Mammary epithelial cell (primary cell): ENCODE measurements at regions of chr9 and their contacts with region 1.

Region 1: DNA sequence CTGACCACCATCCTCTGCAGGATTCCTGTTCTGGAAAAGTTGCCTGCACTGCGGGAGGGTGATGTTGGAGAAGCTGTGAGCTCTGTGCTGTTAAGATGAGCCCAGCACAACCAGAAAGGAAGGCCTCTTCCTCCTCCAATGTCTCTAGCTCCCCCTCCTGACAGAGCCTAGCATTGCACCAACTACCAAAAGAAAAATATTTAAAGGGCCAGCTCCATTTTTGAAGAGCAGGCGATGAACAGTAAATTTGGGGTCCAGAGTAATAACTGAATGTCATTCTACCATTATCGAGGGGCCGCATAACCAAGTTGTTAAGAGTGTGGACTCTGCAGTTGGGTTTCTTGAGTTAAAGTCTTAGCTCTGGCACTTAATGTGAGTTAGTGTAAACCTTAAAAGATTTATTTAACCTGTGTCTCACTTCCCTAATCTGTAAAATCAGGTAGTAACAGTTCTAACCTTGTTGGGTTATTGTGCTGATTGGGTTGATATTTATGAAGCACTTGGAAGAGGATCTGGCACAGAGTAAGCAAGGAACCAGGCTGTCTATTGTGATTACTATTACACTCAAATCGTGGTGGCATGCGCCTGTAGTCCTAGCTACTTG is 3.9 kb downstream of the TEX53 start:
- DNase-seq: peak; percentile 60
- H3K4me3 ChIP-seq: no peak overlapping the region
- H3K27ac ChIP-seq: no peak overlapping the region
- H3K4me1 ChIP-seq: peaks cover 3% of the 10 kb centered on the region
- H3K27me3 ChIP-seq: no peaks in the 10 kb centered on the region
- CTCF ChIP-seq: peak; percentile 89 to 97

Region 2: DNA sequence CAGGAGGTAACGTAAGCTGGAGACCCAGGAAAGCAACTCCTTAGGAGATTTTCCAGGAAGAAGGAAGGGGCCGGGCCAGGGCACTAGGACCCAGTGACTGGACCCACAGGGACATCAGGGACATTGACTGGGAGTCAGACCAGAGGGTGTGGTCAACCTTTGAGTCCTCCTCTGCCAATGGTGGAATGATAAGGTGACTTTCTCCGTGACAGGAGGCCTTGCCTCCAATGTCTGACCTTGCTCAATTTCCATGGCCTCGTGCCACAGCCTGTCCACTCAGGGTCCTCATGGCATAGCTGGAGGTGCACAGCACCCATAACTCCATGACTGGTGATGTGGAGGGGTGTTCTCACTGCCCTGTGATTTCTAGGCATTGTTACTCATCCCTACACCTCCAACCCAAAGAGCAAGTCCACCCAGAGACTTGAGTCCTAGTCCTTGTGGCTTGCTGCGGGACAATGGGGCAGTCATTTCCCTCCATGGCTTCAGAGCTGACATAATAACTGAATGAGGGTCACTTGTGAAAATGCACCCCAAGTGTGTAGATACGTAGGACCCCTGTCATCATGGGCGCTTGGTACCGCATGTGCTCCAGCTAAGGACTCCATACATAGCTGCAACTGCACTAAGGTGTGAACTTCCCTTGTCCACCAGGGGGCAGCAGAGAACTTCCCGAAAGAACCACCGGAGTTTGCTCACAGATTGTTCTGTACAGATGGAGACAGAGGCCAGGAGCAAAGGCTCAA is 571.5 kb before region 1 on chr9:
- CTCF ChIA-PET with region 1: no interaction called
- dilution Hi-C with region 1: no loop called
- in situ Hi-C with region 1: no loop called
- intact Hi-C with region 1: loop called (anchors 10 kb)
- DNase-seq: peak; percentile 72
- H3K4me3 ChIP-seq: no peak overlapping the region
- H3K27ac ChIP-seq: no peak overlapping the region
- H3K4me1 ChIP-seq: no peaks in the 10 kb centered on the region
- H3K27me3 ChIP-seq: no peaks in the 10 kb centered on the region
- CTCF ChIP-seq: peak; percentile 91 to 92

Region 3: GRCh38 chr9:114413861-114414301 is 239.8 kb before region 1 on chr9:
- CTCF ChIA-PET with region 1: no interaction called
- dilution Hi-C with region 1: no loop called
- in situ Hi-C with region 1: loop called in 1 of 2 experiments (anchors 10 kb)
- intact Hi-C with region 1: loop called (anchors 1 kb)
- DNase-seq: no peak
- H3K4me3 ChIP-seq: no peak overlapping the region
- H3K27ac ChIP-seq: no peak overlapping the region
- H3K4me1 ChIP-seq: peaks cover 14% of the 10 kb centered on the region
- H3K27me3 ChIP-seq: no peaks in the 10 kb centered on the region
- CTCF ChIP-seq: no peak

Region 4: GRCh38 chr9:114487607-114488300 is 165.9 kb before region 1 on chr9:
- CTCF ChIA-PET with region 1: interaction called, 4 read pairs
- dilution Hi-C with region 1: no loop called
- in situ Hi-C with region 1: loop called in 1 of 2 experiments (anchors 10 kb)
- intact Hi-C with region 1: loop called (anchors 1 kb)
- DNase-seq: peak; percentile 66
- H3K4me3 ChIP-seq: no peak overlapping the region
- H3K27ac ChIP-seq: no peak overlapping the region
- H3K4me1 ChIP-seq: peaks cover 17% of the 10 kb centered on the region
- H3K27me3 ChIP-seq: no peaks in the 10 kb centered on the region
- CTCF ChIP-seq: peak; percentile 89 to 96

Region 5: DNA sequence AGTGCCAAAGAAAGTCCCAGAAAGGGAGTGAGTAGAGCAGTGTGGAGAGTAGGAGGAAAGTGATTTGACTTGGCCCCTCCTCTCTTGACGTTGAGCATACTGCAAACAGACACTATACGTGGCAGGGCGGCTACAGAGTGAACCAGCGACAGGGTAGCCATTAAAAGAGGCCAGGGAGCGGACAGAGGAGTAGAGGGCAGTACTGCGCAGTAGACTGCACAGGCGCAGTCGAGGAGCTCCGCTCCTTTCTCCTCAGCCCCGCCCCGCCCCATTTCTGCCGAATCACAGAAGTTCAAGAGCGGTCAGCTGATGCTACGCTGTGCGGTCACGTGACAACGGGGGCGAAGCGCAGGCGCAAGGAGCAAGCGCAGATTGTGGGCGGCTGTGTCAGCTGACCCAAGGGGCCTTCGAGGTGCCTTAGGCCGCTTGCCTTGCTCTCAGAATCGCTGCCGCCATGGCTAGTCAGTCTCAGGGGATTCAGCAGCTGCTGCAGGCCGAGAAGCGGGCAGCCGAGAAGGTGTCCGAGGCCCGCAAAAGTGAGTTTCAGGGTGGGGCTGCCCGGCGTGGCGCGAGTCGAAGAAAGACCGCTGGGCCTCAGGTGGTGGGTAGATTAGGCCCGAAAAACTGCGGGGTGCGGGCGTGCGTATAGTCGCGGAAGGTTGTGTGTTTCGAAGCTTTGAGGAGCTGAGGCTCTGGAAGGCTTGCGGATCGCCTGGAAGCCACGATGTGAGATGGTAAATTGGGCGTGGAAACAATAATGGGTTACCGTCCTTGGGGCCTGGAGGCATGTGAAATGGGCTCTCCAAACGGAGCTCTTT is 66.1 kb before region 1 on chr9 and contains the start of gene ATP6V1G1:
- CTCF ChIA-PET with region 1: interaction called, 19 read pairs
- dilution Hi-C with region 1: no loop called
- in situ Hi-C with region 1: no loop called
- intact Hi-C with region 1: loop called (anchors 1 kb)
- DNase-seq: peak; percentile 99
- H3K4me3 ChIP-seq: peak within 1 kb of the TSS; percentile 72 to 94 (median 89)
- H3K27ac ChIP-seq: peak within 1 kb of the TSS; percentile 96
- H3K4me1 ChIP-seq: peaks cover 25% of the 10 kb centered on the region
- H3K27me3 ChIP-seq: no peaks in the 10 kb centered on the region
- CTCF ChIP-seq: peak in 1 of 2 donors; percentile 24
- total RNA-seq, gene ATP6V1G1: 99.6 to 130 TPM

Region 6: DNA sequence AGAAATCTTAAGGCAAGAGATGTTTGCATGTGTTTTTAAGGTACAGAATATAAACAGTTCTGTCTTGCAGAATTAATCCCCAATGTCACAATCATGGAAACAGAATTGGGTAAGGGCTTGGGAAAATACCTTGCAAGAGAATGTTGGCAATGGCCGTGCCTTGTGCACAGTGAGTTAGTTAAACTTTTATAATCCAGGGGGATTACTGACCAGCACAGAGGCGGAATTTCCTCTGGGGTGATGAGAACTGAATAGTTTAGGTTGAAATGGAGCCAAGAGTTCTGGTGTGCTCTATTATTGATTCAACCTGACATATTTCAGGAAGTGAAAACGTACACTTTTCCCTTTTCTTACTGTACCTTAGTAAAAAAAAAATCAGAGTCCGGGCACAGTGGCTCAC is 132.6 kb after region 1 on chr9:
- CTCF ChIA-PET with region 1: no interaction called
- dilution Hi-C with region 1: no loop called
- in situ Hi-C with region 1: no loop called
- intact Hi-C with region 1: no loop called
- DNase-seq: no peak
- H3K4me3 ChIP-seq: no peak overlapping the region
- H3K27ac ChIP-seq: no peak overlapping the region
- H3K4me1 ChIP-seq: peaks cover 19% of the 10 kb centered on the region
- H3K27me3 ChIP-seq: no peaks in the 10 kb centered on the region
- CTCF ChIP-seq: no peak